HEK293T (cell line): ENCODE measurements at regions of chr1 and their contacts with region 1.

Region 1: DNA sequence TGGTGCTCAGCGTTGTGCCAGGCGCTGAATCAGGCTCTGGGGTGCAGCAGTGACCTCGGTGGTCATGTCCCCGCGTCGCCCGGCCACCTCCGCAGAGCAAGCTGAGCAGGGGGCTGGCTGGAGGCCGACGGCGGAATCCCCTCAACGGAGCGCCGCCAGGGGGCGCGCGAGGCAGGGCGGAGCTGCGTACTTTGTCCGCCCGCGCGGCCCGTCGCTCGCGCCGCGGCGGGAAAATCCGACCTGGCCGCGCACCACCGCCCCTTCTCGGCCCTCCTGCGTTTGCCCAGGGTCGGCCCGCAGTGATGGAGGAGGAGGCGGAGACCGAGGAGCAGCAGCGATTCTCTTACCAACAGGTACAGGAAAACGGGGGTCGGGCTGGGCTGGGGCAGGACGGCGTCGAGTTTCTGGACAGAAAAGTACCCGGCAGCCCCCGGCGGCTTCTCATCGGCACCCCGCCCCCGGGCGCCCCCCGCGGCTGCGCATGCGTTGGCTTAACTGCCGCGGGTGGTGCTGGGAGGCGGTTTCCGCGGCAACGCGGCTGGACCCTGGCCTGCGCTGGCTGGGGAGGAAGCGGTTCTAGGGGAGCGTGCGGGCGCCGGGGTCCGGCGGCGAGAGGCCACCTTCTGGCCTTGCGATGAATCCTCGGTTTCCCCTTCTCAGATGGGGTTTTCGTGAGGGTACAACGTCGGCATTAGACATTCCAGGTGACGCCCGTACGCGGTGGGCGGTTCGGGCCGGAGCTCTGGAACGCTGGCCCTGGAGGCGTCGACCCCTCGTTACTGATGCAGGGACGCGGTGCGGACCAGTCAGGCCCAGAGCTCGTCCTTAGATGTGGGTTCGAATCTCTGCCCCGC is at the start of gene CENPS:
- DNase-seq: peak; percentile 96

Region 2: DNA sequence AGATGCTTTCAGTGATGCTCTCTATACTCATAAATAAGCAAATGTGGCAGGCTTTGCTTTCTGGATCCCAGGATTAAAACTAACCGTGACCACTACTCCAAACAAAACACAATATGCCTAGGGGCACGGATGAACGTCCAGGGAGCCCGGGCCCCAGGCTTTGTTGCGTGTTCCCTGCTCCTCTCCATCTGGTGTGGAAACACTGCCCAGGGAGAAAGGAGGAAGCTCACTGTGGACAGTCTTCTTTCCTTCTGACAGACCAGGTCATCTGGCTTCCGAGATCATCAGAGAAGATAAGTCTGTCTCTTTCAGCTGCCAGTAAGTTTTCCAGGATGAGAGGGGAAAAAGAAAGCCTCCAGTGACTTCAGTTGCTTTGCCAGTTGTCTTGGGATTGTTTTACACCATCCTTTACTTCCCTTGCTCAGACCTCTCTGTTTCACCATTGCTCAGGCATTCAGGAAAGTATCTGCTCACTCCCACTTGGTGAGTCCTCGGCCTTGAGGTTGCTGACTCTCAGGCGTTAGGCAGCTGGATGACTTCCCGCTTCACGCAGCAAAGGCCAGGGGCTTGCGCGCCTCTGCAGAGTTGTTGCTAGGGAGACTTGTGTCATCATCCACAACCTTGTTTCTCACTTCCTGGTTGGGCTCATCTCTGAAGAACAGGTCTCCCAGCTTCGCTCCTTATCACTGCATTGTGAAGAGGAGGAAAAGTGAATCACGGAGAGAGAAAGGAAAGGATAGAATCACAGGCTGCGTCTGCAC is 52.2 kb before region 1 on chr1:
- CTCF ChIA-PET with region 1: interaction called, 10 read pairs
- POLR2A ChIA-PET with region 1: no interaction called
- DNase-seq: no peak

Region 3: GRCh38 chr1:10494754-10495474 is 64.5 kb after region 1 on chr1:
- CTCF ChIA-PET with region 1: interaction called, 32 read pairs
- POLR2A ChIA-PET with region 1: interaction called, 26 read pairs
- DNase-seq: peak; percentile 84